ENCODE measurements at regions of chr12 and their contacts with region 1.

Region 1: DNA sequence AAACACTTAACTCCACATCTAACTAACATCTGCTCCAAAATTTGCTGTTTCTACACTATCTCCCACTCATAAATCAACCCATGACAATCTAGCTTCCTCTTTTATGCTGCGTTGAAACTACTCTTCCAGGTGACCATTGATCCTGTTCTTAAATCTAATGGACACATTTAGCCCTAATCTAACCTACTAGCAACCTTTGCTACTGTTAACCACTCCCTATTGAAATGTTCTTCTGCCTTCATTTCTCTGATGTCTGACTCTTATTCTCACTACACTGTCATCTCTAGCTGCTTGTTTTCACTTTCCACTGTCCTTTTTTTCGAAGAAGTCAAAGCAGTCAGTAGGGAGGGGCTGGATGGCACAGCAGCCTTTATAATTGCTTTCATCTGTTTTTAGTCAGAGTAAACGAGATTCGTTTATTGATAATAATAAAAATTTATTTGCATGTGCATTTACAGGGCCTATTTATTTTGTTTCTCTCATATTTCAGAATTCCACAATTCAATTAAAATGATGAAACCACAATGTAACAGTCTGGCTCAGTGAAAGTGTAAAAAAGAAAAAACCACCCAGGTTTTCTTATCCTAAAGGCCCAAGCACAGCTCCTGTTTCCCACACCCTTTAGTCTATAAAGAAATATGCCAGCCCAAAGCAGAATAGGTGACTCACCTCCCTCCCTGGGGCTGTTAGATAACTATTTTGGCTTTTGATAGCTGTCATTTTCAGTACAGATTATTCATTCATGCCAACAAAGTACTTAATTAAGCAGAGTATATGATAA is 44.9 kb downstream of the ATP2B1 start:
- DNase-seq: no peak
- ATAC-seq: peak; percentile 60
- H3K4me3 Mint-ChIP-seq: peak overlapping the region; percentile 25
- H3K27ac Mint-ChIP-seq: peak overlapping the region; percentile 46
- H3K4me1 Mint-ChIP-seq: peaks cover 84% of the 10 kb centered on the region
- H3K27me3 Mint-ChIP-seq: no peaks in the 10 kb centered on the region
- CTCF ChIP-seq: no peak

Region 2: GRCh38 chr12:89345830-89346740 is 317.7 kb before region 1 on chr12:
- CTCF ChIA-PET with region 1: no interaction called
- POLR2A ChIA-PET with region 1: no interaction called
- intact Hi-C with region 1: loop called (anchors 10 kb)
- DNase-seq: no peak
- ATAC-seq: peak; percentile 88
- H3K4me3 Mint-ChIP-seq: peak overlapping the region; percentile 74
- H3K27ac Mint-ChIP-seq: peak overlapping the region; percentile 71
- H3K4me1 Mint-ChIP-seq: peaks cover 61% of the 10 kb centered on the region
- H3K27me3 Mint-ChIP-seq: no peaks in the 10 kb centered on the region
- CTCF ChIP-seq: no peak

Region 3: GRCh38 chr12:89678225-89678624 is 14.5 kb after region 1 on chr12:
- CTCF ChIA-PET with region 1: interaction called, 3 read pairs
- POLR2A ChIA-PET with region 1: no interaction called
- intact Hi-C with region 1: loop called (anchors 2 kb)
- DNase-seq: no peak
- ATAC-seq: no peak
- H3K4me3 Mint-ChIP-seq: peak overlapping the region; percentile 5
- H3K27ac Mint-ChIP-seq: peak overlapping the region; percentile 15
- H3K4me1 Mint-ChIP-seq: peaks cover 82% of the 10 kb centered on the region
- H3K27me3 Mint-ChIP-seq: no peaks in the 10 kb centered on the region
- CTCF ChIP-seq: no peak

Measured in activated B cell treated with CpG ODN at 0.5 μM for 24 hours (primary cell).